K562 (cell line): ENCODE measurements at regions of chr1 and their contacts with region 1.

Region 1: DNA sequence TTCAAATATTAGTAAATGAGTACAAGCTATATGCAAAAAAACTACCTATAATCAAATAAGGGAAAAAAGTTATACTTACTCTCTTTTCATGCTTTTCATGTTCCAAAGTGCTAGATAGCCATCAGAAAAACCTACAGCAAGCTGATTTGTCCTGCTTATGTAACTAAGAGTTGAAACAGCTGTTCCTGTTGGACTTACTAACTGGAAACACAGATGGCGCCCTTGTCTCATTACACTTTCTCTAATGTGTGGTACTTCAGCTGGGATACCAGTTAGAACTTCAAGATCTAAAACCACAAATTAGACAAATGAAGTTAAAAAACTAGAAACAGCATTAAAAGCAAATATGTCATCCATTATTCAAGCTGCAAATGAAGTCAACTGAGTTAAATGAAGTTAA is 24.3 kb downstream of the AHCTF1 start:
- DNase-seq: peak in 1 of 4 experiments; percentile 59
- ATAC-seq: peak; percentile 78
- H3K4me3 ChIP-seq: no peak overlapping the region
- H3K27ac ChIP-seq: no peak overlapping the region
- H3K4me1 ChIP-seq: no peaks in the 10 kb centered on the region
- H3K27me3 ChIP-seq: no peaks in the 10 kb centered on the region
- CTCF ChIP-seq: peak; percentile 28 to 64 (median 48); a peak in 5 of 6 replicates
- EP300 ChIP-seq: no peak
- POLR2A ChIP-seq: no peak
- RAD21 ChIP-seq: peak; percentile 30 to 79

Region 2: DNA sequence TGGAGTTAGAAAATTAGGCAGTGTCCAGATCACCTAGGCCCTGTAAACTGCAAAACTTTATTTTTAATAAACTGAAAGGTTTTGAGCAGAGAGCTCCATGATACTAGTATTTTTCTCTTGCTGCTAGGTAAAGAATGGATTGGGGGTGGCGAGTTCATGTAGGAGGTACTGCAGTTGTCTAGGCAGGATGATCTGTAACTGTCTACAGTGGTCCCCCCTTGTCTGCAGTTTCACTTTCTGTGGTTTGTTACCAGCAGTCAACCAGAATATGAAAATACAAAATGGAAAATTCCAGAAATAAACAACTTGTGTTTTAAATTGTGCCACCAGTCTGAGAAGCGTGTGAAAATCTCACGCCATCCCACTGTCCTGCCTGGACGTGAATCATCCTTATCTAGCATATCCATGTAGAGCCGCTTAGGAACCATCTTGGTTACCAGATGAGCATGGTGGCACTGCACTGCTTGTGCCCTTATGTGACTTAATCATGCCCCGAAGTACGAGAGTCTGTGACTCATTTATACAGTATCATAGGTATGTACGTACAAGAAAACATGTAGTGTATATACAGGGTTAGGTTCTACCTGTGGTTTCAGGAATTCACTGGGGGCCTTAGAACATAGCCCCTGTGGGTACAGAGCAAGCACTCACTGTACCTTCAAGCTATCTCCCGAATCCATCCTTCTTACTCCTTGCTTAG is 69.9 kb before region 1 on chr1:
- CTCF ChIA-PET with region 1: no interaction called
- POLR2A ChIA-PET with region 1: no interaction called
- in situ Hi-C with region 1: no loop called
- intact Hi-C with region 1: no loop called
- DNase-seq: peak in 1 of 4 experiments; percentile 46
- ATAC-seq: peak; percentile 69
- H3K4me3 ChIP-seq: no peak overlapping the region
- H3K27ac ChIP-seq: no peak overlapping the region; the same call in 2 of the 3 replicates
- H3K4me1 ChIP-seq: peaks cover 0 to 7% of the 10 kb centered on the region in 2 experiments; a peak in 2 of 5 replicates
- H3K27me3 ChIP-seq: no peaks in the 10 kb centered on the region
- CTCF ChIP-seq: no peak
- EP300 ChIP-seq: no peak
- POLR2A ChIP-seq: peak; percentile 30; the same call in 1 of the 2 replicates
- RAD21 ChIP-seq: no peak

Region 3: DNA sequence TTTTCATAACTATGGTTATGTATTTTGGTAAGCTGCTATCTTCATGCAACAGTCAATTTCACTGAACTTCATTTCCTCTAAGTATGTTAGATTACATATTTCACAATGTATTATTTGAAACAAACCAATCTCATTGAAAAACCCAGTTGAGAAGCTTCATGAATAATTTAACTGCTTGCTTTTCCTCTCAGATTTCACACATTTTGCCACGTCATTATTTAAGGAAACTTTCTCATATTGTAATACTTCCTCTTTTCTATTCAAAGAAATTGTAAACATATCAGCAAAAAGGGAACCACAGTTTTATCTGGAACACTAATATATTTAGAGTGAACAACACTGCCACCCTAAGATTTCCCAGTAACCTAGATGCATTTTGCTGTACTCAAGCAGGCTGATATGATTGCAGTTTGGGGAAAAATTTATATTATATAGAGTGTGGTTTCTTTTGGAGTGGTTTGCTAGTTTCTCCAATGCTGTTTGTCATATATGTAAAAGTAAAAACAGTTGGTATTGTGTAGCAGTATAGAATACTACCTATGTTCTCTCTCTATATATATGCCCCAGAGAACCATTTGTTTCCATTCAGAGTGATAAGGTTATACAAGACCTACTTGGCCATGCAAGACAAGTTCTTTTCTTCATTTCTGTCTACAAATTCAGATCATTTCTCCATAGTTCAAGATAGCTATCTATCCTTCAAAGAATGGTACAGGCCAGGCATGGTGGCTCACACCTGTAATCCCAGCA is 52.6 kb after region 1 on chr1:
- CTCF ChIA-PET with region 1: no interaction called
- POLR2A ChIA-PET with region 1: no interaction called
- in situ Hi-C with region 1: no loop called
- intact Hi-C with region 1: loop called (anchors 2 kb)
- DNase-seq: peak in 2 of 4 experiments; percentile 20 to 32
- ATAC-seq: peak; percentile 77
- H3K4me3 ChIP-seq: no peak overlapping the region
- H3K27ac ChIP-seq: peak overlapping the region; percentile 69; the same call in 2 of the 3 replicates
- H3K4me1 ChIP-seq: peaks cover 4 to 8% of the 10 kb centered on the region in 2 experiments
- H3K27me3 ChIP-seq: no peaks in the 10 kb centered on the region
- CTCF ChIP-seq: peak in 1 of 3 experiments; percentile 64; a peak in 2 of 6 replicates
- EP300 ChIP-seq: peak; percentile 41
- POLR2A ChIP-seq: no peak
- RAD21 ChIP-seq: peak; percentile 46 to 63

Region 4: DNA sequence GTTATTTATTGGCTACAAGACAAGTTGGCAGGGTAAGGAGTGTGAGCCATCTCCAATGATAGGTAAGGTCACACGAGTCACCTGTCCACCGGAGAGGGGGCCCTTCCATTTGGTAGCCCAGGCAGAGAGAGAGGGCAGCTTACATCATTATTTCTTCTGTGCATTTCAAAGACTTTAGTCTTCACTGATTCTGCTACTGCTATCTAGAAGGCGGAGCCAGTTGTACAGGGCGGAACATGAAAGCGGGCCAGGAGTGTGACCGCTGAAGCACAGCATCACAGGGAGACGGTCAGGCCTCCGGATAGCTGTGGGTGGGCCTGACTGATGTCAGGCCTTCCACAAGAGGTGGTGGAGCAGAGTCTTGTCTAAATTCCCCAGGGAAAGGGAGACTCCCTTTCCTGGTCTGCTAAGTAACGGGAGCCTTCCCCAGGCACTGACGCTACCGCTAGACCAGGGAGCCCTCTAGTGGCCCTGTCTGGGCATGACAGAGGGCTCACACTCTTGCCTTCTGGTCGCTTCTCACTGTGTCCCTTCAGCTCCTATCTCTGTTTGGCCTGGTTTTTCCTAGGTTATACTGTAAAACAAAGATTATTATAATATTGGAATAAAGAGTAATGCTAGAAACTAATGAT is 63.7 kb after region 1 on chr1:
- CTCF ChIA-PET with region 1: no interaction called
- POLR2A ChIA-PET with region 1: no interaction called
- in situ Hi-C with region 1: no loop called
- intact Hi-C with region 1: loop called (anchors 1 kb)
- DNase-seq: peak in 2 of 4 experiments; percentile 25 to 72
- ATAC-seq: peak; percentile 75
- H3K4me3 ChIP-seq: no peak overlapping the region
- H3K27ac ChIP-seq: no peak overlapping the region
- H3K4me1 ChIP-seq: no peaks in the 10 kb centered on the region
- H3K27me3 ChIP-seq: no peaks in the 10 kb centered on the region
- CTCF ChIP-seq: peak; percentile 78 to 88 (median 81)
- EP300 ChIP-seq: no peak
- POLR2A ChIP-seq: no peak
- RAD21 ChIP-seq: peak; percentile 57 to 80

Region 5: DNA sequence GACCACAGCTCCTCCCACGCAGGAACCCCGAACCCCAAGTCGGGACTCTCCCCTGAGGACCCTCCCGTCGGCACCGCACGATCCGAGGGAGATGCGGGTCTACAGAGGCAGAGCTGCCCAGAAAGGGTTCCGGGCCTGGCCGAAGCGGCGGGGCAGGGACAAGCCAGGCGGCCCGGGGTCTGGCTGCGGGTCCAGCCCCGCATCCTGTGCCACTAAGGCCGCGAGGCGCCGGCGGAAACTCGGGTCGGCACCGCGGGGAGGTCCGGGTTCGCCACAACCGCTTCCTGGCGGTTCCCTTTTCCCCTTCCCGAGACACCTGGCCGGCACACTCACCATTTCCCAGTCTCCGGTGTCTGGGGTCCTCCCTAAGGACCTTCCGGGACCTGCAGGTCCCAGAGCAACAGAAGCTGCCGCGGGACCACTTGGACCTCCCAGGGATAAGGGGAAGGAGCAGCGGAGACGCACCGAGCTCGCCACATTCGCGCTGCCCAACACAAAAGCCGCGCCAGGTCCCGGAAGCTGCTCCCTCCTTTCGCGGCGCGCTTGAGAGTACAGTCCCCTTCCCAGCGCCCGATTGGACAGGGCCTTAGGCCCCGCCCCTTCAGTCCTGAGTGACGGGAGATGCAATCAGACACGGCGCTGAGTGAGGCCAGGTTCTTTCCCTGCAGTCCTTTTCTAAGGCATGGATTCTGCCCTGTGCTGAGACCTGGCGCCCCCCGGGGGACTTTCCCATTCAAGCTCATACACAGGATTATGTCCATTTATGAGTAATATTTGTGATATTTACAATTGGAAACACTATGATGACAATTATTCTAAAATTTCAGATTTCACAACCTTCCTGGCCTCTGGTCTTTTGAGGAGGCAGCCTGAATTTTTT is 171.0 kb after region 1 on chr1 and contains the start of gene ZNF670:
- CTCF ChIA-PET with region 1: no interaction called
- POLR2A ChIA-PET with region 1: no interaction called
- in situ Hi-C with region 1: no loop called
- intact Hi-C with region 1: loop called (anchors 5 kb)
- DNase-seq: peak; percentile 98 to 99 (median 98)
- ATAC-seq: peak; percentile 99
- H3K4me3 ChIP-seq: peak within 1 kb of the TSS; percentile 80
- H3K27ac ChIP-seq: peak within 1 kb of the TSS; percentile 85
- H3K4me1 ChIP-seq: peaks cover 8 to 11% of the 10 kb centered on the region in 2 experiments; a peak in 4 of 5 replicates
- H3K27me3 ChIP-seq: no peaks in the 10 kb centered on the region
- CTCF ChIP-seq: peak in 2 of 3 experiments; percentile 25 to 34; a peak in 1 of 6 replicates
- EP300 ChIP-seq: no peak
- POLR2A ChIP-seq: peak; percentile 97
- RAD21 ChIP-seq: peak in 1 of 2 experiments; percentile 51; a peak in 2 of 4 replicates
- polyA plus RNA-seq, gene ZNF670: 17.3 to 23.4 TPM

Region 6: DNA sequence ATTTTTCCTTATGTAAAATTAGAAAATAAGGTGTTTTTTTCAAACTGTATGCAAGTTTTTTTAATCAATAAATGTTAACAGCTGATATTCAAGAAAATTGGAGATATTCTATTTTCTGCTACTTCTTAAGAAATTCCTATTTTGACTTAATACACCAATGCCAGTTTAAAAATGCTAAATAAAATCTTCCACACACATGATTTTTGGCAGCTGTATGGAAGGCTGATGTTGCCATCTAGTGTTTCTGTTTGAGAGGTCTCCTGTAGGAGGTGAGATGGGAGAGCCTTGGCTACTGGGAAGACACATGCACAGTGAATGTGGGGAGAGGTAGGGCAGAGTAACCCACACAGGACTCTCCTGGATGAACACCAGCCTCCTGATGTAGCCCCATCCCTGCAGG is 579.6 kb after region 1 on chr1:
- CTCF ChIA-PET with region 1: interaction called, 4 read pairs
- POLR2A ChIA-PET with region 1: no interaction called
- in situ Hi-C with region 1: no loop called
- intact Hi-C with region 1: loop called (anchors 2 kb)
- DNase-seq: peak; percentile 28 to 61 (median 43)
- ATAC-seq: peak; percentile 95
- H3K4me3 ChIP-seq: no peak overlapping the region
- H3K27ac ChIP-seq: no peak overlapping the region
- H3K4me1 ChIP-seq: no peaks in the 10 kb centered on the region
- H3K27me3 ChIP-seq: peaks cover 0 to 8% of the 10 kb centered on the region in 2 experiments; a peak in 4 of 5 replicates
- CTCF ChIP-seq: peak; percentile 57 to 82 (median 63)
- EP300 ChIP-seq: no peak
- POLR2A ChIP-seq: no peak
- RAD21 ChIP-seq: peak; percentile 88 to 89